Endothelial cell of umbilical vein (primary cell): ENCODE measurements at regions of chr11 and their contacts with region 1.

Region 1: DNA sequence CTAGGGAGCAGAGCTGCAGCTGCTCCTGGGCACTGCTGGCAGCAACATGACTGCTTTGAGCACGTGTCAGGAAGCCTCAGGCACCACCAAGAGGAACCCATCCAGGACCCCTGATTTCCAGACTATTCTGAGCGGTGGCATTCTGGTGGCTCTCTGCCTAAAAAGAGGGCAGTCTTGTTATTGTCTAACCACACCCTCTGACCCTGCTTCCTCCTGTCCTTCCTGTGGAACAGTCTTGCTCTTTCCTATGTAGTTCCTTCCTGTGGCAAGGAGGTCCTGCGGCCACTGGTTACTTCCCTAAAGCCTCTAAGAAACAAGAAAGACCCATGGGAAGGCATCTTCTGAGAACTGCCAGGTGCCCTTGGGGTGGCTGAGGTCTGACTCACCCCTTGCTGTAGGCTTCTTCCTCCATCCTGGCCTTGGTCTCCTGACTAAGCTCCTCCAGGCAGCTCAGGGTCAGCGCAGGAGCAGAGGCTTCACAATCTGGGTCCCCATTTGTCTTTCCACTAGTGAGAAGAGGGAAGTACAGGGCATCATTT is 13.1 kb upstream of the LYVE1 start:
- DNase-seq: peak; percentile 71
- H3K4me3 ChIP-seq: no peak overlapping the region
- H3K27ac ChIP-seq: peak overlapping the region; percentile 65
- H3K4me1 ChIP-seq: peaks cover 38% of the 10 kb centered on the region
- H3K27me3 ChIP-seq: no peaks in the 10 kb centered on the region
- CTCF ChIP-seq: no peak
- POLR2A ChIP-seq: no peak

Region 2: DNA sequence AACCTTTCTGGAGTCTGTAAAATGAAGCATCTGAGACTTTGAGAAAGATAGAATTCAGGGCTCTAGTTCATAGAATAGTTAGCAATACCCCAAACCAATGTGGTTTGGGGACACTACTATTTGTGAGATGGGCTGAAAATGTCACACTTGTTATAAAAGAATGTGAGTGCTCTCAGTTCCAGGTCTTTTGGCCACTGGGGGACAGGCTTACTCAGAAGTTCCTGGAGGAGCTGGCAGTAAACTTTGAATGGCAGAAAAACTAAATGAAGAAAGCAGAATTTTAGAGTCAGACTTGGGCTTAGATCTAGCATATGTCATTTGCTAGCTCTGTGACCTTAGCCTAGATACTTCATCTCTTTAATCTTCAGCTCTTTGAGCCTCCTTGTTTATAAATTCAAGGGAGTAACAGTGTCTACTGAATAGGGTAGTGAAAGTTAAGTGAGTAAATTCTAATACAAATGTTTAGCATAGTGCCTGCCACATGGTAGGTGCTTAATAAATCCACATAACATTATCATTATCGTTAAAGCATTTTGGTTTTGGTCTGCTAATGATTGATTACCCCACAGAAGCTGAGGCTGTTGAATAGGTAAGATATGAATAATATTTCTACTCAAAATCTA is 16.7 kb before region 1 on chr11:
- CTCF ChIA-PET with region 1: interaction called, 14 read pairs
- POLR2A ChIA-PET with region 1: interaction called, 4 read pairs
- dilution Hi-C with region 1: no loop called
- intact Hi-C with region 1: no loop called
- DNase-seq: peak; percentile 49
- H3K4me3 ChIP-seq: no peak overlapping the region
- H3K27ac ChIP-seq: no peak overlapping the region
- H3K4me1 ChIP-seq: peaks cover 7% of the 10 kb centered on the region
- H3K27me3 ChIP-seq: no peaks in the 10 kb centered on the region
- CTCF ChIP-seq: peak; percentile 8 to 51
- POLR2A ChIP-seq: no peak